OCI-LY7 (cell line): ENCODE measurements at regions of chr4 and their contacts with region 1.

Region 1: DNA sequence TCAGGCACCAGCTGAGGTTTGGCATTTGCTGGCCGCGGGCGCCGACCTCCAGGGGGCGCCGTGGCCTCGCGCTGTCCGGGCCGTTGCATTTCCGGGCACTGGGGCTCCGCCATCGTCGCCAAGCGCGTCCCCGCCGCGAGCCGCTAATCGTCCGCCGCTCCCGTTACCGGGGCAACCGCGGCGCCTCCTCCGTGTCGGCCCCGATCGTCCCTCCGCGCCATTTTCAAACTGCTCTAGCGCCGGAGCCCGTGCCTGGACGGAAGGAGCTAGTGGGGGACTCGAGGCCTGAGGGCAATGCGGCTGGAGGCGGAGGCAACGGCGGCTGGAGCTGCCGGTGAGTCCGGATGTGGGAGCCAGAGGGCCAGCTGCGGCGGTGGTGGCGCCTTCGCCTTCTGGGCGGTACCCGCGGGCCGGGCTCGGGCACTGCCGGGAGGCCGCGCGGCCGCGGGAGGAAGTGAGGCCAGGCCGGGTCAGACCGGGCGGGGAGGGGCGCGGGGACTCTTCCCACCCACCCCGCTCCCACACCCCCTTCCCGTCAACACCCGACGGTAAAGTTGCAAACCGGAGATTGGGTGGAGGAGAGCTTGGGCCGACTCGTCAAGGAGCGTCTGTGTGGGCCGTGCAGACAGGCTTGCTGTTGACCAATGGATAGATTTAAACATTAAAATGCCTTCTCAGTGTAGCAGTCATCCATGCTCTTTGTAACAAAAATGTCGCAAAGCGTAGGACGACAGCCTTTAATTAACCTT is at the start of gene CEP135:
- DNase-seq: peak; percentile 95
- H3K4me3 ChIP-seq: peak within 1 kb of the TSS; percentile 82
- H3K27ac ChIP-seq: peak within 1 kb of the TSS; percentile 95
- H3K4me1 ChIP-seq: peaks cover 53% of the 10 kb centered on the region
- CTCF ChIP-seq: peak; percentile 87
- total RNA-seq, gene CEP135: 21.6 and 32.4 TPM in 2 replicates

Region 2: DNA sequence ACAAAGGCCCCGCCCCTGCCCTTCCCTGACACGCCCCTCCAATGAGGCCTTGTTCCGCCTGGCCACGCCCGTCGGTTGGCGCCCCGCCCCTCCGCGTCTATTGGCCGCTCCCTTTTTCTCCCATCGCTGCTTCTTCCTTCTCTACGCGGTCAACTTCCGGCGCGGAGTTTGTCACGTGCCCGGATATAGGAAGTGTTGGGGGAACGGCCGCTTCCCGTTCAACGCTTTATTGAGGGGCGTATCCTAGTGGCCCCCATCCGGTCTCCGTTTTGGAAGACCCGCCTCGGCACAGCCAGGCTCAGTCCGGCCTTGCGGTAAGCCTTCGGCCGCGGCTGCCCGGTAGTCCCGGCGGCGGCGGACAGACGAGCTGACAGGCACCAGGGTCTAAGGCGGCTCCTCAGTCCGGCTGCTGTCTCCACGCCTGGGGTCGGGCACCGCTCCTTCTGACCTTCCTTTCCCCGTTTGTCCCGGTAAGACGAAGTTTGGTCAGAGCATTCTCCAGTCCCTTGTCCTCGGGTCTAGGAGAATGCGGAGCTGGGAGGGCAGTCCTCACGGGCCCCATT is 95.3 kb before region 1 on chr4 and contains the start of gene EXOC1:
- CTCF ChIA-PET with region 1: no interaction called
- POLR2A ChIA-PET with region 1: interaction called, 3 read pairs
- intact Hi-C with region 1: loop called (anchors 2 kb)
- DNase-seq: peak; percentile 97
- H3K4me3 ChIP-seq: peak within 1 kb of the TSS; percentile 95
- H3K27ac ChIP-seq: peak within 1 kb of the TSS; percentile 26
- H3K4me1 ChIP-seq: peaks cover 17% of the 10 kb centered on the region
- CTCF ChIP-seq: no peak
- total RNA-seq, gene EXOC1: 23.7 and 29.1 TPM in 2 replicates

Region 3: DNA sequence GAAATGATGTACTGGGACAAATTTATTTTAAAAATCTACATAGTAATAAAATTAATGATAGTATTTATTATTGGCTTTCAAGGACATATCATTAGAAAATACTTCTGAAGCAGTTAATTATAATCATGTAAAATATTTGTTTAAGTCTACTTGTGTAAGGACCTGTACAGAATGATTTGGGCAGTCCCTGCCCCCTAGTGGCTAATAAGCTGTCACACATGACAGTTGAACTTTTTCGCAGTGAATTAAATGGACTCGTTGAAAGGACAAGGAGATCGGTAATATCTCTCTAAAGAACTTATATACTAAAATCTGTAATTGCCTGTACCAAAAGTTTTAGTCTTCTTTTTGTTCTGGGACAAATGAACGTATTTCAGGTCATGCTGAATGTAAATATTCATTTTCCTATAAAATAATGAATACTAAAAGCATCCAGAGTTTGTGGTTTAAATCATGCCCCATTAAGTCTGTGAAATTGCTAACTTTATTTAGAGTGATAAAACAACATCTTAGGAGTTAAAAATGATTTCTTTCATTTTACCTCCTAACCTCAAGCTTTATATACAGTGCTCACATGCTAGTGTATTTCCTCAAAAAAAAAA is 81.8 kb before region 1 on chr4:
- CTCF ChIA-PET with region 1: no interaction called
- POLR2A ChIA-PET with region 1: no interaction called
- intact Hi-C with region 1: no loop called
- DNase-seq: peak; percentile 74
- H3K4me3 ChIP-seq: no peak overlapping the region
- H3K27ac ChIP-seq: no peak overlapping the region
- H3K4me1 ChIP-seq: no peaks in the 10 kb centered on the region
- CTCF ChIP-seq: peak; percentile 99

Region 4: DNA sequence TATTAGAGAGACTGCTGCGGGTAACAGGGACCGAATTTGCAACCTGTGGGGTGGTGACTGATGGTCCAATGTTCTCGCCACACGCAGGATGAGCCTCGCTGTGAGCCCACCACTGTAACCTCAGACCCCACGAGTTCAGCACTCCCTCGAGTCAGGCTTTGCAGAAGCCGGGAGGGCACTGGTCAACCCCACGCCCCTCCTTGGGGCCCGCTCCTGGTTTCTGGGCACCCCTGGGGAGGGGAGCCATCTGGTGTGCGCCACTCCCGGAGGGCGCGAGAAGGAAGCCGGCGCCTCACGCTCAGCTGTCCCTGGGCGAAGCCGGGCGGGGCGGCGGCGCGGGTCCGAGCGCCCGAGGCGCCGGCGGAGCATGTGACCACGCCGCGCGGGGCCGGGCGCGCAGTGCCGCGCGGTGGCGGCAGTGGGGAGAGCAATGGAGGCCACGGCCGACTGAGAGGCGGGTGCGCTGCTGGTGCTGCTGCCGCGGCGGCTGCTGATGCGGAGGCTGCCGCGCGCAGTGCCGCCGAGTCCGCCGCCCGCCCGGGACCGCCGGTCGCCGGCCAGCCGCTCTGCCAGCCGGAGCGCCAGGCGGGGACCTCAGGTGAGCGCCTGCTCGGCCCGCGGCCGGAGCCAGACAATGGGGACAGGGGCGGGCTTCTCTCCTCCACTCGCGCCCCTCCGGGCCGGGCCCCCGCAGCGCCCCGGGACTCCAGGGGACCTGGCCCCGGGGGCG is 100.0 kb after region 1 on chr4:
- CTCF ChIA-PET with region 1: no interaction called
- POLR2A ChIA-PET with region 1: interaction called, 30 read pairs
- intact Hi-C with region 1: loop called (anchors 1 kb)
- DNase-seq: peak; percentile 89
- H3K4me3 ChIP-seq: peak overlapping the region; percentile 81
- H3K27ac ChIP-seq: peak overlapping the region; percentile 72
- H3K4me1 ChIP-seq: peaks cover 31% of the 10 kb centered on the region
- CTCF ChIP-seq: no peak; the same call in 1 of the 2 replicates

Region 5: GRCh38 chr4:56387023-56388001 is 438.4 kb after region 1 on chr4 and contains the start of gene AASDH:
- CTCF ChIA-PET with region 1: no interaction called
- POLR2A ChIA-PET with region 1: interaction called, 8 read pairs
- intact Hi-C with region 1: loop called (anchors 2 kb)
- DNase-seq: peak; percentile 95
- H3K4me3 ChIP-seq: peak within 1 kb of the TSS; percentile 77
- H3K27ac ChIP-seq: peak within 1 kb of the TSS; percentile 85
- H3K4me1 ChIP-seq: peaks cover 22% of the 10 kb centered on the region
- CTCF ChIP-seq: no peak
- total RNA-seq, gene AASDH: 10.4 TPM in 2 replicates